Dendritic cell treated with granulocyte-macrophage colony-stimulating factor and Interleukin-4, amounts not matched to agents 40 ng/mL and 50 ng/mL, for 4 days (primary cell): ENCODE measurements at regions of chr5 and their contacts with region 1.

Region 1: GRCh38 chr5:177509381-177509951 is at the start of gene DOK3:
- H3K4me3 Mint-ChIP-seq: peak within 1 kb of the TSS; percentile 97
- H3K27ac Mint-ChIP-seq: peak within 1 kb of the TSS; percentile 96
- H3K4me1 Mint-ChIP-seq: peaks cover 74% of the 10 kb centered on the region
- H3K27me3 Mint-ChIP-seq: no peaks in the 10 kb centered on the region

Region 2: DNA sequence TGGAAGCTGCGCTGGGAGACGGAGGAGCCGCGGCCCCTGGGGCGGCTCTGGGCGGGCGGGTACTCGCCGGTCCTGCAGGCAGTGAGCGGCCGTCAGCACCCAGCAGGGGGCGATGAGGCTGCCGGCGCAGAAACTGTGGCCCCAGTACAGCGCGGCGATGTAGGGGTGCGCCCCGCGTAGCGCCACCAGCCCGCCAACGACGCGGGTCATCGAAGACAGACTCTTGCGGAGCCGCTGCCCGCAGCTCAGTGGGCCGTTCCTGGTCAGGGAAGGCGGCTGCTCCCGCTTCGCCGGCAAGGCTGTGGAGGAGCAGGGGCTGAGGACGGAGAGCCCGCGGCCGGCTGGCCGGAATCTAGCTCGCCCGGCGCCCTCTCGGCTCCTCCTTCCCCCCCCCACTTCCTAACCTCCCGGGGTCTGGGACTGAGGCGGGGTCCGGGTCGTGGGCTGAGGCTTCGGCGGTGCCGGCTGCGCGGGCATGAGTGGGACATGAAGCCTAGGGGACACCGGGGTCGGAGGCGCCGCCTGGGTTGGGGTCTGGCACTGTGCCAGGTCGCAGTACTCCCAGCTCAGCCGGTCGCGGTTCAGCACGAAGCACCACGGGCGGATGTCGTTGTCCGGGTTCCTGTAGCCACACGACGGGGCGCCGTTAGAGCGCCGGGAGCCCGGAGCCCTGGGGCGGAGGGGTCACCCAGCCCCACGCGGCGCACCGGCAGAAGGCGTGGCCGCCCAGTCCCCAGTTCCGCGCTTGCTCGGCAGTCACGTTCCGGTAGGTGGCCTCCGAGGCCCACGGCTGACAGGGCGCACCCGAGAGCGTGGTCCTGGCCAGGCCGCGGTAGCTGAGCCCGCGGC is 105.5 kb before region 1 on chr5:
- intact Hi-C with region 1: loop called (anchors 5 kb)
- H3K4me3 Mint-ChIP-seq: peak overlapping the region; percentile 69
- H3K27ac Mint-ChIP-seq: no peak overlapping the region
- H3K4me1 Mint-ChIP-seq: peaks cover 44% of the 10 kb centered on the region
- H3K27me3 Mint-ChIP-seq: peaks cover 65% of the 10 kb centered on the region